ENCODE measurements at regions of chr22 and their contacts with region 1.

Region 1: GRCh38 chr22:19479357-19480172 is at the start of gene CDC45:
- DNase-seq: peak; percentile 97 to 98
- H3K4me3 ChIP-seq: peak within 1 kb of the TSS; percentile 86 to 87
- H3K27ac ChIP-seq: peak within 1 kb of the TSS; percentile 85 to 88
- H3K4me1 ChIP-seq: peaks cover 0 to 23% (median 12%) of the 10 kb centered on the region in 4 donors
- H3K27me3 ChIP-seq: no peaks in the 10 kb centered on the region
- CTCF ChIP-seq: peak in 1 of 2 experiments; percentile 16

Region 2: GRCh38 chr22:19178656-19179496 is 300.7 kb before region 1 on chr22 and contains the start of gene SLC25A1:
- intact Hi-C with region 1: loop called (anchors 5 kb)
- DNase-seq: peak; percentile 89 to 96
- H3K4me3 ChIP-seq: peak within 1 kb of the TSS; percentile 77 to 78
- H3K27ac ChIP-seq: peak within 1 kb of the TSS; percentile 86 to 89
- H3K4me1 ChIP-seq: peaks cover 6 to 52% (median 36%) of the 10 kb centered on the region in 4 donors
- H3K27me3 ChIP-seq: no peaks in the 10 kb centered on the region
- CTCF ChIP-seq: no peak

Region 3: DNA sequence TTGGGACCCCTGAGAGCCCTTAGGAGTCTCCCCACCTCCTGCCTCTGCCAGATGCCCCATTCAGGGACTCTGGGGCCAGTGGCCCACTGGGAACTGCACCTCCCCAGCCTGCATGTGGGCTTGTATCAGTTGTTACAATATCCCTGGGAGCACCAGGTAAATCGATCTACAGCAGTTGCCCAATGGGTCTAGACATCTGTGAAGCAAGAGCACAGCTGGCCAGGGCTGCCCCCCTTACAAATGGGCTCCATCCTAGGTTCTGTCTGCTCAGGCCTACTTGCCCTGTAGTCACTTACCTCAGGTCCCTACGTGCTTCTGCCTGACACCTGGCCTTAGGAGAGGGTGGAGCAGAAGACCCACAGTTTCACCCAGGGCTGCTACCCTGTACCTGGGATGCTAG is 110.7 kb before region 1 on chr22:
- intact Hi-C with region 1: no loop called
- DNase-seq: no peak
- H3K4me3 ChIP-seq: no peak overlapping the region
- H3K27ac ChIP-seq: no peak overlapping the region
- H3K4me1 ChIP-seq: no peaks in the 10 kb centered on the region
- H3K27me3 ChIP-seq: no peaks in the 10 kb centered on the region
- CTCF ChIP-seq: no peak

Region 4: GRCh38 chr22:19419464-19420178 is 59.9 kb before region 1 on chr22:
- intact Hi-C with region 1: no loop called
- DNase-seq: no peak
- H3K4me3 ChIP-seq: no peak overlapping the region
- H3K27ac ChIP-seq: no peak overlapping the region
- H3K4me1 ChIP-seq: peaks cover 0 to 20% (median 2%) of the 10 kb centered on the region in 4 donors
- H3K27me3 ChIP-seq: no peaks in the 10 kb centered on the region
- CTCF ChIP-seq: no peak

Region 5: GRCh38 chr22:19717691-19718455 is 238.3 kb after region 1 on chr22:
- intact Hi-C with region 1: loop called (anchors 5 kb)
- DNase-seq: peak; percentile 64 to 88
- H3K4me3 ChIP-seq: peak overlapping the region; percentile 68 to 90
- H3K27ac ChIP-seq: peak overlapping the region; percentile 84 to 87
- H3K4me1 ChIP-seq: peaks cover 0 to 46% (median 38%) of the 10 kb centered on the region in 4 donors
- H3K27me3 ChIP-seq: peaks cover 0 to 16% of the 10 kb centered on the region in 2 donors
- CTCF ChIP-seq: peak; percentile 97 to 98

Measured in tibial artery (tissue), 4 donors.